Endothelial cell of umbilical vein (primary cell): ENCODE measurements at regions of chr2 and their contacts with region 1.

Region 1: DNA sequence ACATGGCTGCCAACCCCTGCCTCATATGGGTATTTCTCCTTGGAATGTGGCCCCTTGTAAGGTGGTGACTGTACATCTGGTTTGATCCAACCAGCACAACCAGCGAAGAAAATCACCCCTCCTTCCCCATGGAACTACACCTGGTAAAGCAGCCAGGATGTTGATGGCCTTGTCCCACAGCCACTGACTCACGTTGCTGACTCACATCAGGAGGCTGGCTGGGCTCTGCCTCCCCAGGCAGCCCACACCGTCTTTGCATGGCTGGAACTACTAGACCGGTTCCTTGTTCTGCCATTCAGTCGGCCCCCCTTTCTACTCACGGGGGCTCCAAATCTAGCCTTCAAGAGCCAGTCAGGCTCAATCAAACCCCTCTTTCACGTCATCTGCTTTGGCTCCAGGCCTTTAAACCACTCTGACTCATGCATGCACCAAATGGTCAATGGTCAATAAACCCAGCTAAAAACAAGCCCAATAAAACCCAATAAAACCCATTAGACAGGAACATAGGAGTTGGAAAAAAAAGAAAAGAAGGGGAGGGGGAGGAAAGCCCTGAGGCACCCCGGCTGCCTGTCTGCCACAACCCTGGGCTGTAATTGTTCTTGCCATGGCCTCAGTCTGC is 114.8 kb downstream of the PLB1 start:
- DNase-seq: peak; percentile 92
- H3K4me3 ChIP-seq: no peak overlapping the region
- H3K27ac ChIP-seq: peak overlapping the region; percentile 76
- H3K4me1 ChIP-seq: peaks cover 38% of the 10 kb centered on the region
- H3K27me3 ChIP-seq: no peaks in the 10 kb centered on the region
- CTCF ChIP-seq: no peak
- POLR2A ChIP-seq: no peak

Region 2: DNA sequence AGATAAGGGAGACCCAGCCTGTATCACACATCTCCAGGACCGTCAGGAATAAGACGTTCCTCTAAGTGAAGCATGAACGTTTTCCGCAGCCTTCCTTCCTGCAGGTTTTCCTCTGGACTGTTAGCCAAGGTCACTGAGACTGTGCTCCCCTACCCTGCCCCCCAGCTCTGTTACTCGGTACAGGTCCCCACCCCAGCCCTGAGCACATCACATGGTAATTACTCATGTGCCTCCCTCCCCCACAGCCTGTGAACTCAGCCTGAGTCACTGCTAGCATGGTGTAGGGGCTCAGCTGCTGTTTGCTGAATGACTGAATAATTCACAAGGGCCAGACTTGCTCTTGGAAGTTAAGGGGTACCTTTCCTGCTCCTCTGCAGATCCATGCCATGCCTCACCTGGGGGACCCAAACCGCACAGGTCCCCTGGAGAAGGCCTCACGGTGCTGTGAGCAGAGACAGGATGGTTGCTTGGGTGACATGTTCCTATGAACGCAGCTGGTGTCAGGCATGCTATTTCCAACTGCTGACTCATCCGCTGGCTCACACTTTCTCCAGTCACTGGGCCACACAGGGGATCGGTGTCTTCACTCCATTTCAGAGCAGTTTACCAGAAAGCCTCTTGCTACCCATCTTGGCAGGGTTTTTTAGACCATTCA is 26.7 kb before region 1 on chr2:
- CTCF ChIA-PET with region 1: no interaction called
- POLR2A ChIA-PET with region 1: no interaction called
- dilution Hi-C with region 1: no loop called
- intact Hi-C with region 1: loop called (anchors 1 kb)
- DNase-seq: peak; percentile 98
- H3K4me3 ChIP-seq: no peak overlapping the region
- H3K27ac ChIP-seq: peak overlapping the region; percentile 91
- H3K4me1 ChIP-seq: peaks cover 23% of the 10 kb centered on the region
- H3K27me3 ChIP-seq: no peaks in the 10 kb centered on the region
- CTCF ChIP-seq: no peak
- POLR2A ChIP-seq: peak; percentile 36